ENCODE measurements at regions of chr3 and their contacts with region 1.

Region 1: GRCh38 chr3:69665026-69665737 is 74.1 kb upstream of the MITF start:
- DNase-seq: no peak
- ATAC-seq: peak; percentile 91

Region 2: GRCh38 chr3:69445024-69445423 is 220.2 kb before region 1 on chr3:
- intact Hi-C with region 1: loop called (anchors 5 kb)
- DNase-seq: no peak
- ATAC-seq: no peak

Region 3: DNA sequence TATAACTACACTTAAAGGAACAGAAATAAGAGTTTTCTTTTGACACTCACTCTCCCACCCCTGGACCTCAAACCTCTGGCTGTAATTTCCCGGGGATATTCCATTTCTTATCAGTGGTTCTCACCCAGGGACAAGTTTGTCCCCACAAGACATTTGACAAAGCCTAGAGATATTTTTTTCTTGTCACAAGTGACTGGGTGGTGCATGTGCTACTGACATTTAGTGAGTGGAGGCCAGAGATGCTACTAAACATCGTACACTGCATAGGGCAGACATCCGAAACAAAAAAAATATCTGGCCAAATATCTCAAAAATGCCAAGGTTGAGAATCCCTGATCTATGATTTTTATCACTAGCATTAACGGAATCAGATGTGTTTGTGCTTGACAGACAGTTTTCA is 111.3 kb before region 1 on chr3:
- intact Hi-C with region 1: loop called (anchors 5 kb)
- DNase-seq: no peak
- ATAC-seq: peak; percentile 40